ENCODE measurements at regions of chr12 and their contacts with region 1.

Region 1: GRCh38 chr12:105221583-105222283 is 14.2 kb downstream of the APPL2 start:
- DNase-seq: no peak
- H3K4me3 ChIP-seq: no peak overlapping the region
- H3K27ac ChIP-seq: no peak overlapping the region
- H3K4me1 ChIP-seq: no peaks in the 10 kb centered on the region
- CTCF ChIP-seq: no peak

Region 2: GRCh38 chr12:104763168-104763805 is 458.4 kb before region 1 on chr12:
- CTCF ChIA-PET with region 1: no interaction called
- POLR2A ChIA-PET with region 1: interaction called, 11 read pairs
- intact Hi-C with region 1: no loop called
- DNase-seq: no peak
- H3K4me3 ChIP-seq: no peak overlapping the region
- H3K27ac ChIP-seq: no peak overlapping the region
- H3K4me1 ChIP-seq: peaks cover 15% of the 10 kb centered on the region
- CTCF ChIP-seq: no peak

Region 3: GRCh38 chr12:104846056-104846767 is 375.5 kb before region 1 on chr12:
- CTCF ChIA-PET with region 1: no interaction called
- POLR2A ChIA-PET with region 1: no interaction called
- intact Hi-C with region 1: no loop called
- DNase-seq: no peak
- H3K4me3 ChIP-seq: no peak overlapping the region
- H3K27ac ChIP-seq: no peak overlapping the region
- H3K4me1 ChIP-seq: no peaks in the 10 kb centered on the region
- CTCF ChIP-seq: no peak